GM10248 (cell line): ENCODE measurements at regions of chr20 and their contacts with region 1.

Region 1: GRCh38 chr20:34720266-34720665 is 16.1 kb downstream of the TP53INP2 start:
- DNase-seq: no peak
- CTCF ChIP-seq: no peak

Region 2: DNA sequence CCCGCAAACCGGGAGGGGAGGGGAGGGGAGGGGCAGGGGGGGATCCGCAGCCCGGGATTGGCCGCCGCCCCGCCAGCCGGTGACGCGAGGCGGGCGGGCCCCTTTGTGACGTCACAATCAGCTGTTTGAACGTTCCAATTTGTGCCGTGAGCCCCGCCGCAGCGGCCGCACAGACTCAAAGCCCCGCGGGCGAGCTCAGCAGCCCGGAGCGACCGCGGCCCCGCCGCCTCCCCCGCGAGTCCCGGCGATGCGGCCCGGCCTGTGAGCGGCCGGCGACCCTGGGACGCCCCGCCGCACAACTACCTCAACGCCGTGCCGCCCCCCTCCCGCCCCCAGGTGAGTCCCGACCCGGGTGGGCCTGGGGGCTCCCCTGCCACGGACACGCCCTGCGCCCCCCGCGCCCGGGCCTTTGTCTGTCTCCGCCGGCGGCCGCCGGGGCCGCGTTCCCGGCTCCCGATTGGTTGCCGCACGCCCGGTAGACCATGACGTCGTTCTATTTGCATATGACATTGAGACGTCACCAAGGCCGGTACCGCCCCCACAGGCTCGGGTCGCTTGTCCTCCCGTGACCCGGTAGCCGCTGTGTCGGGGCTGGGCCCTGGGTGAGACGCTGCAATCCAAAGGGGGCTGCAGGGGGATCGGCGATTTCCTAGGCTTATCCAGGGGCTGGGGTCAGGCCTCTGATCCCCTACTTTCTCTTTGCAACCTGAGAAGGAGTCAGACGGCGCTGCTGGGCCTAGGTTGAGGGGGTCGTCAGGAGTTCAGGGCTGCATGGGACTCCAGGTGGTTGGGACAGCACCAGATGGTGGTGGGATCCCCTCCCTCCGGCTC is 15.9 kb before region 1 on chr20 and contains the start of gene TP53INP2:
- CTCF ChIA-PET with region 1: interaction called, 36 read pairs
- POLR2A ChIA-PET with region 1: interaction called, 9 read pairs
- DNase-seq: peak; percentile 89
- CTCF ChIP-seq: no peak

Region 3: GRCh38 chr20:34732523-34732922 is 12.3 kb after region 1 on chr20:
- CTCF ChIA-PET with region 1: interaction called, 15 read pairs
- POLR2A ChIA-PET with region 1: no interaction called
- DNase-seq: no peak
- CTCF ChIP-seq: no peak